Sigmoid colon (tissue), 7 donors: ENCODE measurements at regions of chr3 and their contacts with region 1.

Region 1: GRCh38 chr3:113151461-113152031 is 59.8 kb upstream of the BOC start:
- DNase-seq: peak; percentile 93
- H3K4me3 ChIP-seq: no peak overlapping the region
- H3K27ac ChIP-seq: peak overlapping the region; percentile 73 to 88 (median 82)
- H3K4me1 ChIP-seq: peaks cover 0 to 81% (median 72%) of the 10 kb centered on the region in 4 donors
- H3K27me3 ChIP-seq: no peaks in the 10 kb centered on the region
- CTCF ChIP-seq: no peak
- EP300 ChIP-seq: peak in 1 of 4 donors; percentile 30
- POLR2A ChIP-seq: no peak

Region 2: DNA sequence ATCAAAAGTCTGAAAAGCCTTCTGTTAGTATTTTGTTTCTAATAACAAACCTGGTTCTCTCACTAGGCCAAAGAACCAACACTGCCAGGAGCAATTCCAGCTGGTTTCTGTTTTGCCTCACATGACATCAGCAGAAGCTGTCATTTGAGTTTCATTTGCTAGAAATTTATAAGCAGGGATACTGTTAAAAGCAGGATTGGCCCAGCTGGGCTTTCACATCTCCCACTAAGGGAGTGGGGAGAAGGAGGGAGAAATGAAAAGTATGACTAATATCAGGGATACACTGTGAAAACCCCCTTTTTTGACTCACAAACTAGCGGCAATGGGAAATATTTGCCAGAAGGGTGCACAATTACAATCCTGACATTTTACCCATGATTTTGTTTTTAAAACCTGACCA is 515.9 kb before region 1 on chr3:
- intact Hi-C with region 1: loop called (anchors 10 kb)
- DNase-seq: peak; percentile 90
- H3K4me3 ChIP-seq: peak overlapping the region in 3 of 4 donors; percentile 19 to 51 (median 48)
- H3K27ac ChIP-seq: peak overlapping the region; percentile 80 to 86 (median 84)
- H3K4me1 ChIP-seq: peaks cover 2 to 96% (median 84%) of the 10 kb centered on the region in 4 donors
- H3K27me3 ChIP-seq: no peaks in the 10 kb centered on the region
- CTCF ChIP-seq: no peak
- EP300 ChIP-seq: peak; percentile 47 to 92 (median 77)
- POLR2A ChIP-seq: peak in 1 of 2 donors; percentile 11

Region 3: GRCh38 chr3:113035387-113035982 is 116.1 kb before region 1 on chr3:
- intact Hi-C with region 1: no loop called
- DNase-seq: no peak
- H3K4me3 ChIP-seq: no peak overlapping the region
- H3K27ac ChIP-seq: no peak overlapping the region
- H3K4me1 ChIP-seq: no peaks in the 10 kb centered on the region
- H3K27me3 ChIP-seq: no peaks in the 10 kb centered on the region
- CTCF ChIP-seq: peak; percentile 67 to 76 (median 70)
- EP300 ChIP-seq: no peak
- POLR2A ChIP-seq: no peak

Region 4: DNA sequence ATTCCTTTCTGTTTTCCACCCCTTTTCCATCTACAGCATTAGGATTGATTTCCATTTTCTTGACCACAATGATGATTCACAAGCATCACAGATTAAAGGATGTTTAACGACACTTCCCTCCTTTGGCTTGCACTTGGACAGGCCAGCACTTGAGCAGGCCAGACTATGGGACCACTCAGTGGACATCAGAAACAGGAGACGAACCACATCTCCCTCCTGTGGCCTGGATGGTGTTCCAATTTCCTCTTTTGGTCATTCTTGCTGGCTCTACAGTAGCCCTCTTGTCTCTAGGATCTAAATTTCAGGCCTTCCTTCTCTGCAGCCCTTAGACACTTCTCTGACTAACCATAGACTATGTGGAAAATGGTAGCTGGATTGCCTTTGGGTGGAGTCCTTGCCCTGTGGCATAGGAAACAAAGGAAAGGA is 19.0 kb before region 1 on chr3:
- intact Hi-C with region 1: no loop called
- DNase-seq: no peak
- H3K4me3 ChIP-seq: no peak overlapping the region
- H3K27ac ChIP-seq: peak overlapping the region; percentile 27 to 55 (median 42)
- H3K4me1 ChIP-seq: peaks cover 0 to 21% (median 16%) of the 10 kb centered on the region in 4 donors
- H3K27me3 ChIP-seq: no peaks in the 10 kb centered on the region
- CTCF ChIP-seq: no peak
- EP300 ChIP-seq: no peak
- POLR2A ChIP-seq: no peak

Region 5: GRCh38 chr3:113194823-113195401 is 43.4 kb after region 1 on chr3:
- intact Hi-C with region 1: loop called (anchors 5 kb)
- DNase-seq: no peak
- H3K4me3 ChIP-seq: no peak overlapping the region
- H3K27ac ChIP-seq: peak overlapping the region; percentile 63 to 79 (median 78)
- H3K4me1 ChIP-seq: peaks cover 0 to 42% (median 36%) of the 10 kb centered on the region in 4 donors
- H3K27me3 ChIP-seq: no peaks in the 10 kb centered on the region
- CTCF ChIP-seq: no peak
- EP300 ChIP-seq: no peak
- POLR2A ChIP-seq: no peak

Region 6: GRCh38 chr3:113211330-113212149 is 60.0 kb after region 1 on chr3 and contains the start of gene BOC:
- intact Hi-C with region 1: loop called (anchors 2 kb)
- DNase-seq: peak; percentile 77
- H3K4me3 ChIP-seq: peak within 1 kb of the TSS; percentile 73 to 97 (median 91)
- H3K27ac ChIP-seq: peak within 1 kb of the TSS; percentile 95 to 97 (median 96)
- H3K4me1 ChIP-seq: peaks cover 0 to 53% (median 25%) of the 10 kb centered on the region in 4 donors
- H3K27me3 ChIP-seq: no peaks in the 10 kb centered on the region
- CTCF ChIP-seq: no peak
- EP300 ChIP-seq: no peak
- POLR2A ChIP-seq: no peak
- total RNA-seq, gene BOC: 80.3 to 122 (median 103) TPM

Region 7: DNA sequence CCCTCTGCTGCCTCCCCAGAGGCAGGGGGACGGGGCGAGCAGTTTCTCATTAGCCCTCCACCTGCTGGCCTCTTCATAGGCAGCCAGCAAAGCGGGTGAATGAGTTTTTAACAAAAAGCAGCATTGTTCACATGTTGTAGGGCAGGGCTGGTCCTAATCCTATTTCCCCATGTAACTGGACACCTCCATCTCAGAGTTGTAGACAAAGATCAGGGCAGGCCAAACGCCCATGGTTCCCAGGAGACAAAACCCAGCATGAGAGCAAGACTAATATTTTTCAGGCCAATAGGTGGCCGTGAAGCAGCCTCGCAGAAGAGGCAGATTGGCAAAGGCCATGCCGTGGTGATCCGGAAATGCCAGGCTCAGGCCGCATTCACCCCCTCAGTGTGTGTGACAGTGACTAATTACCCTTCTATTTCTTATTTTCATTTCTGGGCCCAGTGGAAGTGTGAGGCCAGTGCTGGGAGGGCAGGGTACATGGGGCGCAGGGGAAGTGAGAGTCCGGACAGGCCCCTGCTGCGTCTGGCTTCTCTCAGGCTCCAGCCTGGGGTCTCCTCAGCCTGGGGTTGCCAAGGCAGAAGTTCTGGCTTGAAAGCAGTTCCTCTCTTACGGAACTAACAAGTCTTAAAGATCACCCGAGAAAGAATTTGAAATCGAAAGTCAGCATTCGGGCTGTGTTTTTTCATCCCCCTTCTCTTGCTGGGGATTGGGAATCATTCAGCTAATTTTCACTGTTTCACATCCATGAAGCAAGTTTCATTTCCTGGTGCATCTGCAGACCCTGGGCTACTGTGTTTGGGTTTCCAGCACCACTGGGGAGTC is 124.6 kb after region 1 on chr3:
- intact Hi-C with region 1: loop called (anchors 5 kb)
- DNase-seq: peak; percentile 78
- H3K4me3 ChIP-seq: peak overlapping the region in 3 of 4 donors; percentile 23 to 38 (median 37)
- H3K27ac ChIP-seq: peak overlapping the region; percentile 78 to 88 (median 87)
- H3K4me1 ChIP-seq: peaks cover 0 to 37% (median 33%) of the 10 kb centered on the region in 4 donors
- H3K27me3 ChIP-seq: no peaks in the 10 kb centered on the region
- CTCF ChIP-seq: peak; percentile 11 to 35 (median 16)
- EP300 ChIP-seq: no peak
- POLR2A ChIP-seq: no peak